ENCODE measurements at regions of chr16 and their contacts with region 1.

Region 1: DNA sequence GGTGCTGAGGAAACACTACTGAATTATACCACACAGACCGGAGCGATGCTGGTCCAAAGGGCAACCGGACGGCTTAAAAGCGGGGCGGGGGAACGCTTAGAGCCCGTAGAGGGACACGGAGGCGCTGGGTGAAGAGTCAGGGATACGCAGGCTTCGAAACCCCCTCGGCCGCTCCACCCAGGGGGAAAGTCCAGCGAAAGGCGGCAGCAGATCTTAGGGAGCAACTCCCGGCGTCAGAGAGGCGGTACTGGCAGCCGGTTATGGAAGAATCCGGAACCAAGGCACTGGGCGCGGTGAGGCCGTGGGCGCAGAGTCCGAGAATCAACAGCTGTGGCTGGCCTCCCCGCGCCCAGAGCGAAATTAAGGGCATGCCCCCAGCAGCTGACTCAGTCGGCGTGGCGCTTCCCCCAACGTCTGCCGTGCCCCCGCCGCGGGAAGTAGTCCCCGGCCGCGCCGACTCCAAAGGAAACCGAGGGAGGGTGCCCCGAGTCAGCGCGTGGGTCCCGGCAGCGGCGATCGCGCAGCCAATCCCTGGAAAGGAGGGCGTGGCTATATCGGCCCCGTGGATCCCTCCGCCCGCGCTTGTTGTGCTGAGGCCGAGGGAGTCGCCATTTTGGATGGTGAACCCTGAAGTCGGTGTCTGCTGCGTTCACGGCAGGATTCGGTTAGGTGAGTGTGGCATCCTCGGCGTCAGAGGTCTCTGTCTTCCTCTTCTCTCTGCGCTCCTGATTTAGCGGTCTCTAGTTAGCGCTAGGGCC is at the start of gene IST1:
- DNase-seq: peak; percentile 97 to 98 (median 97)
- H3K4me3 ChIP-seq: peak within 1 kb of the TSS; percentile 95 to 99
- H3K4me3 Mint-ChIP-seq: peak within 1 kb of the TSS; percentile 93 to 98 (median 96)
- H3K27ac ChIP-seq: peak within 1 kb of the TSS; percentile 90
- H3K27ac Mint-ChIP-seq: peak within 1 kb of the TSS; percentile 96 to 99 (median 98)
- H3K4me1 ChIP-seq: peaks cover 44% of the 10 kb centered on the region
- H3K4me1 Mint-ChIP-seq: peaks cover 10 to 51% (median 25%) of the 10 kb centered on the region in 4 donors
- H3K27me3 ChIP-seq: no peaks in the 10 kb centered on the region
- H3K27me3 Mint-ChIP-seq: no peaks in the 10 kb centered on the region
- total RNA-seq, gene IST1: 282 to 287 TPM

Region 2: DNA sequence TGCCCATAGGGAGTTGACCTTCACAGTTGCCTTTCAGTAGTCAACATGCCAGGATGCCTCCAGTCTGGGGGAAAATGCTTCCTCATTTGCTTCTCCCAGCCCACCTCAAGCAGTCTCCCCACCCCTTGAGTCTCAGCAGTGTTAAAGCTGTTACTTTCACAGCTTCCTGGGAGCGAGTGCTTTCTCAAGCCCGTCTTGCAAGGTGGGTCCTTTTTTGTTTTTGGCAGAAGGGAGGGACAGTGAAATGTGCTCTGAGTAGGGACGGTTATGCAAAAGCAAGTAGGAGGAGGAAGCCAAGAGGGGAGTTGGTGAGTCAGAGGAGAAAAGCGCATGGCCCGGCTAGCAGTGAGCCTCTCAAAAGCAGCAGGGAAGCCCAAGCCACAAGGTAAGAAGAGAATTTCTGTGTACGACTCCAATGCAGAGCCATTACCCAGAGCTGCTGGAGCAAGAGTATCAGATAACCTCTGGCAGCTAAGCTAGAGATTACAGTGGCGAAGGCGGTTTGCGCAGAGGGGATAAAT is 368.9 kb before region 1 on chr16 and contains the start of gene CHST4:
- CTCF ChIA-PET with region 1: no interaction called
- POLR2A ChIA-PET with region 1: no interaction called
- intact Hi-C with region 1: no loop called
- DNase-seq: no peak
- H3K4me3 ChIP-seq: no peak within 1 kb of the TSS
- H3K4me3 Mint-ChIP-seq: no peak within 1 kb of the TSS
- H3K27ac ChIP-seq: no peak within 1 kb of the TSS
- H3K27ac Mint-ChIP-seq: peak within 1 kb of the TSS in 1 of 7 donors; percentile 26
- H3K4me1 ChIP-seq: no peaks in the 10 kb centered on the region
- H3K4me1 Mint-ChIP-seq: no peaks in the 10 kb centered on the region
- H3K27me3 ChIP-seq: peaks cover 7% of the 10 kb centered on the region
- H3K27me3 Mint-ChIP-seq: peaks cover 12 to 24% of the 10 kb centered on the region in 2 donors
- total RNA-seq, gene CHST4: not detected

Region 3: DNA sequence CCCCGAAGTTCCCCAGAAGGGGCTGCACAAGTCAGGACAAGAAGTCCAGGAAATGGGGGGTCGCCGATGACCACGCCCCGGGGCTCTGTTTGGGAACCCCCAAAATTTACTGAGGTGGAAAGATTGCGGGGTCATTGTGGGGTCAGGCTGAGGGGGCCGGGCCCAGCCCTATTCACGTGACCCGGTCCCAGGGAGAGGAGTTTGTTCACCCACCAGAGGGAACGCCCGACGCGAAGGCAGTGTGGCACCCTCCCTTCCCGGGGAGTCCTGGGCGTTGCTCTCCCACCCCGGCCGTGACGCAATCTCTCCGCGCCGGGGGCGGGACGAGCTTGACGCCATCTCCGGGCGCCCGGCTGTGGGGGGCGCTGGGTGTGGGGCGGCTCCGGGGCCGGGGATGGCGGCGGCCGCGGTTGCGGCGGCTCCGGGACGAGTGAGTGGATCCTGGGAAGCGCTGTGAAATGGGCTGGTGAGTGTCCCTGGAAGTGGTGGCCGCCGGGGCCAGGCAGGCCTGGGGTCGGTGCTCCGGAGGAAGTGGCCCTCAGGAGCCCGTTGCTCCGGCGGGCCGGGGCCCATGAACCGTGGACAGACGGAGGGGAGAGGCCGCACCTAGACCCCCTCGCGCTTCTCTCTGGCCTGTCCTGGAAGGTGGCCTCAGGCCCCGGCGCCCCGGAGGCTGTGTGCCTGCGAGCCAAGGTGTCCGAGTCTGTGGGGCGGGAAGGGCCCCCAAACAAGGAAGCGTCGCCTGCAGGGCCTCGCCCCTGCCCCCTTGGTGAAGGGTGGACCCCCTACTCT is 49.3 kb before region 1 on chr16 and contains the start of gene ATXN1L:
- CTCF ChIA-PET with region 1: interaction called, 5 read pairs
- POLR2A ChIA-PET with region 1: interaction called, 4 read pairs
- intact Hi-C with region 1: loop called (anchors 1 kb)
- DNase-seq: peak; percentile 90 to 98 (median 94)
- H3K4me3 ChIP-seq: peak within 1 kb of the TSS; percentile 84 to 89
- H3K4me3 Mint-ChIP-seq: peak within 1 kb of the TSS; percentile 90 to 95 (median 94)
- H3K27ac ChIP-seq: peak within 1 kb of the TSS; percentile 88
- H3K27ac Mint-ChIP-seq: peak within 1 kb of the TSS; percentile 97 to 99 (median 98)
- H3K4me1 ChIP-seq: peaks cover 18% of the 10 kb centered on the region
- H3K4me1 Mint-ChIP-seq: peaks cover 26 to 54% (median 38%) of the 10 kb centered on the region in 4 donors
- H3K27me3 ChIP-seq: no peaks in the 10 kb centered on the region
- H3K27me3 Mint-ChIP-seq: no peaks in the 10 kb centered on the region
- total RNA-seq, gene ATXN1L: 29.6 to 31.6 TPM

Region 4: DNA sequence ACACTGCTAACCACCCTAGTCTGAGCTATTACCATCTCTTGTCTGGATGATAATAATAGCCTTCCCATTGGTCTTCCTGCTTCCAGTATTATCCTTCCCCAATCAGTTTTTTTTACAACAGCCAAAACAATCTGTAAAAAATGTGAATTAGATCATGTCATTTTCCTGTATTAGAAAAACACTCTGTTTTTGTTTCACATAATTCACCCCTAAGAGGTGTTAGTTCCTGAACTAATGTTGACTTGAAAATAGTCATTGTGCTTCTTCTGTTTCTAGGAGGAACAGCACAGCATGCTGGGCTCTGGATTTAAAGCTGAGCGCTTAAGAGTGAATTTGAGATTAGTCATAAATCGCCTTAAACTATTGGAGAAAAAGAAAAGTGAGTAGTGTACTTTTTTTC is 20.2 kb after region 1 on chr16:
- CTCF ChIA-PET with region 1: interaction called, 3 read pairs
- POLR2A ChIA-PET with region 1: interaction called, 4 read pairs
- intact Hi-C with region 1: loop called (anchors 2 kb)
- DNase-seq: no peak
- H3K4me3 ChIP-seq: no peak overlapping the region
- H3K4me3 Mint-ChIP-seq: peak overlapping the region in 1 of 8 donors; percentile 54
- H3K27ac ChIP-seq: no peak overlapping the region
- H3K27ac Mint-ChIP-seq: peak overlapping the region in 5 of 7 donors; percentile 25 to 74 (median 67)
- H3K4me1 ChIP-seq: peaks cover 34% of the 10 kb centered on the region
- H3K4me1 Mint-ChIP-seq: peaks cover 38 to 71% (median 53%) of the 10 kb centered on the region in 4 donors
- H3K27me3 ChIP-seq: no peaks in the 10 kb centered on the region
- H3K27me3 Mint-ChIP-seq: no peaks in the 10 kb centered on the region

Region 5: GRCh38 chr16:72093448-72094265 is 198.6 kb after region 1 on chr16 and contains the starts of genes DHX38 and TXNL4B:
- CTCF ChIA-PET with region 1: no interaction called
- POLR2A ChIA-PET with region 1: no interaction called
- intact Hi-C with region 1: loop called (anchors 2 kb)
- DNase-seq: peak; percentile 92 to 97 (median 94)
- H3K4me3 ChIP-seq: peak within 1 kb of the TSS; percentile 82 to 88
- H3K4me3 Mint-ChIP-seq: peak within 1 kb of the TSS; percentile 97 to 100 (median 100)
- H3K27ac ChIP-seq: peak within 1 kb of the TSS; percentile 90
- H3K27ac Mint-ChIP-seq: peak within 1 kb of the TSS; percentile 90 to 100 (median 100)
- H3K4me1 ChIP-seq: peaks cover 43% of the 10 kb centered on the region
- H3K4me1 Mint-ChIP-seq: peaks cover 39 to 62% (median 47%) of the 10 kb centered on the region in 4 donors
- H3K27me3 ChIP-seq: no peaks in the 10 kb centered on the region
- H3K27me3 Mint-ChIP-seq: no peaks in the 10 kb centered on the region
- total RNA-seq, gene DHX38: 109 to 120 TPM
- total RNA-seq, gene TXNL4B: 23.7 to 26.1 TPM

Measured in CD4-positive, alpha-beta memory T cell (primary cell).